ENCODE measurements at regions of chr13 and their contacts with region 1.

Region 1: GRCh38 chr13:44713788-44714469 is 137.8 kb upstream of the TSC22D1 start:
- DNase-seq: peak; percentile 84
- H3K4me3 ChIP-seq: no peak overlapping the region
- CTCF ChIP-seq: no peak

Region 2: DNA sequence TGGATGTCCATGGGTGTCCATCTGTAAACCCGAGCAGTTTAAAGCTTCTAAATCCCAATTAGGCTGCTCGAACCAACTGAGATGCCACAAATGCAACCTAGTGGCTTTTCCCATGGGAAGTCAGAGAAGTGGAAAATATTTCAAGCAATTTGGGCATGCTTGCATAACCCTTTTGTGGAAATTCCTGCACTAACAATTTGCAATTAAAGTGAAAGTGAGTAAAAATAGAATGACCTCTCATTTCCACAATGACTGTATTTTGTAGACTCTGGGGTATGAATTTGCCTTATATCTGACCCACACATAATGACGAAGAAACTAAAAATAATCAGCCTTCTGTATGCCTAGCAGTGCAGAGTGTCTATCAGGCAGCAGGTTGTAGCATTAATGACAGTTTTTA is 46.0 kb before region 1 on chr13:
- CTCF ChIA-PET with region 1: no interaction called
- POLR2A ChIA-PET with region 1: interaction called, 14 read pairs
- DNase-seq: peak; percentile 75
- H3K4me3 ChIP-seq: no peak overlapping the region; the same call in 1 of the 2 replicates
- CTCF ChIP-seq: no peak

Region 3: DNA sequence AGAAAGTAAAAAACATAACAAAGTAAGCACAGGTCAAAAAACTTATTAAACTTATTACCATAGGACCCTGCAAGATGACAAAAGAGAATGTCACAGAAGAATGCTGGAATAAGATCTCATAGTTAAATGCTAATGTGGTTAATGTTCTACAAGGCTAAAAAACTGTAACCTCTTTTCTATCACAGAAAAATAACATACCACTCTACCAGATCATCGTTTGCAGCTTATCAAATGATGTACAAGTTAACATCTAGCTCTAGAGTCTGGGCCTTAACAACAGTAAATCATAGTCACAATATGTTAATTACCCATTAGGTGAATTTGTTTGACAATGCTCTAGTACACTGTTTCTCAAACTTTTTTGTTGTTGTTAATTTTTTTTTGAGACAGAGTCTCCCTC is 222.3 kb after region 1 on chr13:
- CTCF ChIA-PET with region 1: no interaction called
- POLR2A ChIA-PET with region 1: no interaction called
- DNase-seq: no peak
- H3K4me3 ChIP-seq: no peak overlapping the region
- CTCF ChIP-seq: no peak